ENCODE measurements at regions of chr15 and their contacts with region 1.

Region 1: GRCh38 chr15:62940755-62941361 is 101.7 kb upstream of the TPM1 start:
- DNase-seq: peak; percentile 92

Region 2: DNA sequence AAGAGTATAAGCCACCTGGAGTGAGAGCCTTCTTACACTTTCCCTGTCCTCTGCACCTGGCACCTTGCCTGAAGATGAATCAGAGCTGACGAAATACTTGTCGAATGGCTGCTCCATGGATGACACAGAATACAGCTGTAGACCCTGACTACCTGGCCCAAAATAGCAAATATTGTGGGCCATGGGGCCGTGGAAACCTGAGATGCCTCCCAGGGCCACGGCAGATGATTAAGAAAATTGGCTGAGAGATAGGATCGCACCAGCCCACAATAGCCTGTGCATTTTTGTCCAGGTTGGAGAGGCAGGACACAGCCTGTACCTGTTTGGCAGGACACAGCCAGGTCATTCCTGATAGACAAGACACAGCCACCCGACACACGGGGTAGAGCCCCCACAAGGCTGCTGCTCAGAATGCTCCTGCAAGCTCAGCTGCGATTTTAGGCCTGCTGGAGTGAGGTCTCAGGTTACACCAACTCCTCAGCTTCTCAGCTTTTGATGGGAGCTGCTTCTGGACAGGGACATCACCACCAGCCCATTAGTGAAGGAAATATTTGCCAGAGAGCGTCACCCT is 78.8 kb after region 1 on chr15:
- intact Hi-C with region 1: loop called in 1 of 2 experiments (anchors 10 kb)
- DNase-seq: no peak